Activated T-helper 2 cell treated with anti-CD3 and anti-CD28 coated beads, Interferon-gamma antibody, Interleukin-2, Interleukin-4, amounts not matched to agents 10 μg/mL and 5 μg/mL and 100 μg/mL, durations not matched to agents 14 hours and 24 hours and 36 hours (primary cell): ENCODE measurements at regions of chr5 and their contacts with region 1.

Region 1: DNA sequence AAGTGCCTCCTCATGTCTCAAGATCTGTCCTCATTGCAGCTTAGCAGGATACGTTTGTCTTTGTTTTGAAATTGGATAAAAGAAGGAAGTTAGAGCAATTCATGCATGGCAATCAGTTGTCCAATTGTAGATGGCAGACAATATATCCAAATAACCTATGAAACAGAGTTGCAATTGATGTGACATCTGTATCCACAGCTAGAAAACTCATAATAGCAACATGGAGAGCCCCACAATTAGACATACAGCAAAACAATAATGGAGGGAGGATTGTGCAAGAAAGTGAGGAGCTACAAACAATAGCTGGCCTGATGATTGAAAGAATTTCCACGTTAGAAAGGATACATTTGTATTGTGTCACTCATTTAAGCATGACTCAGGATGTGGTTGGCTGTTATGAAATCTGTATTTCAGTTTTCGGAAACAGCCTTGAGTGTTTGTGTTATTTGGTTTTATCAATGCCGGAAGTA is 132.0 kb downstream of the FAM174A start:
- DNase-seq: no peak
- H3K4me3 Mint-ChIP-seq: no peak overlapping the region
- H3K27ac Mint-ChIP-seq: no peak overlapping the region
- H3K4me1 Mint-ChIP-seq: peaks cover 9% of the 10 kb centered on the region
- H3K27me3 Mint-ChIP-seq: peaks cover 11% of the 10 kb centered on the region

Region 2: GRCh38 chr5:100479079-100479688 is 188.0 kb before region 1 on chr5:
- intact Hi-C with region 1: no loop called
- DNase-seq: no peak
- H3K4me3 Mint-ChIP-seq: no peak overlapping the region
- H3K27ac Mint-ChIP-seq: no peak overlapping the region
- H3K4me1 Mint-ChIP-seq: no peaks in the 10 kb centered on the region
- H3K27me3 Mint-ChIP-seq: peaks cover 12% of the 10 kb centered on the region

Region 3: GRCh38 chr5:100731768-100732167 is 64.6 kb after region 1 on chr5:
- intact Hi-C with region 1: loop called (anchors 10 kb)
- DNase-seq: peak; percentile 26
- H3K4me3 Mint-ChIP-seq: peak overlapping the region; percentile 66
- H3K27ac Mint-ChIP-seq: peak overlapping the region; percentile 81
- H3K4me1 Mint-ChIP-seq: peaks cover 20% of the 10 kb centered on the region
- H3K27me3 Mint-ChIP-seq: no peaks in the 10 kb centered on the region

Region 4: GRCh38 chr5:100826133-100826532 is 158.9 kb after region 1 on chr5:
- intact Hi-C with region 1: no loop called
- DNase-seq: no peak
- H3K4me3 Mint-ChIP-seq: no peak overlapping the region
- H3K27ac Mint-ChIP-seq: peak overlapping the region; percentile 56
- H3K4me1 Mint-ChIP-seq: peaks cover 40% of the 10 kb centered on the region
- H3K27me3 Mint-ChIP-seq: no peaks in the 10 kb centered on the region

Region 5: DNA sequence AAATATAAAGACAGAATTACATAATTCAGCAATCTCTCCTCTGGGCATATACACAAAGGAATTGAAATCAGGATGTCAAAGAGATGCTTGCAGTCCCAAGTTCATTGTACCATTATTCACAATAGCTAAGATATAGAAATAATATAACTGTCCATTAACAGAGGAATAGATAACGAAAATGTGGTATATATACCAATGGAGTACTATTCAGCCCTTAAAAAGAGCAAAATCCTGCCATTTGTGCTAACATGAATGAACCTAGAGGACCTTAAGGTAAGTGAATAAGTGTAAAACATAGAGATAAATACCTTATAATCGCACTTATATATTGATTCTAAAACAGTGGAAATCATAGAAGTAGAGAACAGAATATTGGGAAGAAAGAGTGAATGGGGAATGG is 228.9 kb after region 1 on chr5:
- intact Hi-C with region 1: loop called (anchors 2 kb)
- DNase-seq: no peak
- H3K4me3 Mint-ChIP-seq: peak overlapping the region; percentile 63
- H3K27ac Mint-ChIP-seq: peak overlapping the region; percentile 51
- H3K4me1 Mint-ChIP-seq: peaks cover 60% of the 10 kb centered on the region
- H3K27me3 Mint-ChIP-seq: no peaks in the 10 kb centered on the region